Right ventricle myocardium inferior (tissue), 1 donor: ENCODE measurements at regions of chr12 and their contacts with region 1.

Region 1: GRCh38 chr12:49358483-49359141 is 8.7 kb upstream of the SPATS2 start:
- DNase-seq: no peak
- ATAC-seq: peak; percentile 67

Region 2: DNA sequence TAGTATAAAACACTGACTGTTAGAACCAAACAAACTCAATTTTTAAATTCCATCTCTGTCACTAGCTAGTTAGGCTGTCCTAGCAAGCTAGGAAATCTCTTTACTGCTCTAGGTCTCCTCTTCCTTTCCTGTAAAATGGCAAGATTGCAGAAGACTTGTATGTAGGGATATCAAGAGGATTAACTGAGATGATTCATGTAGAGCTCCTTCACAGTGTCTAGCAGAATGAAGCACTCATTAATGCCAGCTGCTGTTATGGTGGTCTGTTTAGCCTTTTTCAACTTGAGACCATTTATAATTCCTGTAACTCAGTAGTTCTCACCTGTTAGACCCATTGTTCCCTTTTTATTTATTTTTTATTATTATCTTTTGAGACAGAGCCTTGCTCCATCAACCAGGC is 112.4 kb after region 1 on chr12:
- intact Hi-C with region 1: no loop called
- DNase-seq: no peak
- ATAC-seq: no peak

Region 3: DNA sequence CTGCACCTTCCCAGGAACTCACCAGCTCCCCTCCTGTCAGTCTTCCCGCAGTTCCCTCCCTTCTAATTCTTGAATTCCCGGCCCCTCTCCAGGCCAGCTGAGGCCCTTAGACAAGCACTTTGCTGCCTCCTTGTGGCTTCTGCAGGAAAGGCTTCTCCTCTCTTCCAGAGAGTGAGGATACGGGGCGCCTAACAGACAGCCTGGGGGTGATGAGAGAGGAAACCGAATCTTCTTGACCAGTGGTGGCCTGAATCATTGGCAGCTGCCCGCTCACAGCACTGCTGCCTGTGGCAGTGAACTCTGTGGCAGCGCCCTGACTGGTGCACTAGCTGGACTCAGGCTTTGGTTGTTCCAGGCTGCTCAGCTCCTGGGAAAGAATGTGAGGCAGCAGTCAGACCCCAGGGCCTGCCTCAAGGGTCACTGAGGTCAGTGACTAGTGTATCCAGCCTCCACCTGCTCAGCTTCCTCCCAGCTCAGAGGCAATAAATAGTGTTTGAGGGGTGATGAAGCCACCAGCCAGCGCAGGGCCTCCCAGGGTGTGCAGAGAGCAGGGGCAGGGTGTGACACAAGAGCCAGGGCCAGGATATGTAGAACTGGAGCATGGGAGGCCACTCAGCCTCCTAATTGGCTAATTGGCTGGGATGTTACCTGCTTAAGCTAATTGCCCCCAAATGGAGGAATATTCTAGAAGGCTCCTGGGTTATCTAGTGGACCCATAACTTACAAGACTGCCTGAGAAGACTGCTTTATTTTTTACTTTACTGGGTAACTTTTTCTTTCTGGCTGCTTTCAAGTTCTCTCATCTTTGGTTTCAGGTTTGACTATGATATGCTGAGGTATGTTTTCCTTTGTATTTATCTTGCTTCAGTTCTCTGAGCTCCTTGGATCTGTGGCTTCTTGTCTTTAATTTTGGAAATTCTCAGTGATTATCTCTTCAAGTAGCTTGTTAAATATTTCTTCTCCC is 222.2 kb after region 1 on chr12:
- intact Hi-C with region 1: loop called (anchors 1 kb)
- DNase-seq: no peak
- ATAC-seq: peak; percentile 74